IMR-90 (cell line): ENCODE measurements at regions of chr14 and their contacts with region 1.

Region 1: GRCh38 chr14:51547260-51547659 is 104.5 kb upstream of the FRMD6 start:
- DNase-seq: peak; percentile 100
- ATAC-seq: peak; percentile 93
- H3K4me3 ChIP-seq: no peak overlapping the region
- H3K27ac ChIP-seq: no peak overlapping the region
- H3K4me1 ChIP-seq: peaks cover 17% of the 10 kb centered on the region
- H3K27me3 ChIP-seq: no peaks in the 10 kb centered on the region
- CTCF ChIP-seq: no peak
- POLR2A ChIP-seq: peak; percentile 31; the same call in 1 of the 2 replicates
- RAD21 ChIP-seq: no peak; the same call in 1 of the 2 replicates

Region 2: DNA sequence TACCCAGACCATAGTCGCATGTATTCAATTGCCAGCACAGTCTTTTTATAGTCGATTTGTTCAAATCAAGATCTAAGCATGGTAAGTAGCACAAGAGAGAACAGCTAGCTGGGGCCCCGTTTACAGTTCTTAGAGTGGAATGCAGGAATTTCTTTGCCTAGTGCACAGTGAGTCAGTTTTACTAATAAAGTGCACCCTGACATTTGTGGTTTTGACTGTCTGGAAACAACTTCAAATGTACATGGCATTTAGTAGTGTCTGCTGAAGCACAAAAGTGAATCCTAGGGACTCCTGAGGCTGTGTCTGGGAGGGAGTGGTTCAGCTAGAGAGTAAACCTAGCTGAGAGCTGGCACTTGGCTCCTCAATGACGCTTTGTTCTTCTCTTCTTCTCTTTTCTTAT is 242.3 kb before region 1 on chr14:
- CTCF ChIA-PET with region 1: no interaction called
- POLR2A ChIA-PET with region 1: no interaction called
- dilution Hi-C with region 1: no loop called
- in situ Hi-C with region 1: no loop called
- intact Hi-C with region 1: loop called (anchors 5 kb)
- DNase-seq: peak; percentile 96
- ATAC-seq: peak; percentile 97
- H3K4me3 ChIP-seq: no peak overlapping the region
- H3K27ac ChIP-seq: peak overlapping the region; percentile 33; the same call in 1 of the 2 replicates
- H3K4me1 ChIP-seq: peaks cover 5% of the 10 kb centered on the region
- H3K27me3 ChIP-seq: no peaks in the 10 kb centered on the region
- CTCF ChIP-seq: no peak
- POLR2A ChIP-seq: no peak; the same call in 1 of the 2 replicates
- RAD21 ChIP-seq: peak; percentile 37

Region 3: GRCh38 chr14:51581017-51581881 is 34.0 kb after region 1 on chr14:
- CTCF ChIA-PET with region 1: no interaction called
- POLR2A ChIA-PET with region 1: no interaction called
- dilution Hi-C with region 1: no loop called
- in situ Hi-C with region 1: no loop called
- intact Hi-C with region 1: no loop called
- DNase-seq: peak; percentile 94
- ATAC-seq: peak; percentile 91
- H3K4me3 ChIP-seq: peak overlapping the region; percentile 19; the same call in 1 of the 2 replicates
- H3K27ac ChIP-seq: peak overlapping the region; percentile 16; the same call in 1 of the 2 replicates
- H3K4me1 ChIP-seq: peaks cover 12% of the 10 kb centered on the region
- H3K27me3 ChIP-seq: no peaks in the 10 kb centered on the region
- CTCF ChIP-seq: no peak
- POLR2A ChIP-seq: no peak
- RAD21 ChIP-seq: 0 out of 2 replicates have a peak, but pooled peaks have one; percentile 1

Region 4: GRCh38 chr14:51716610-51717009 is 169.3 kb after region 1 on chr14:
- CTCF ChIA-PET with region 1: no interaction called
- POLR2A ChIA-PET with region 1: no interaction called
- dilution Hi-C with region 1: no loop called
- in situ Hi-C with region 1: no loop called
- intact Hi-C with region 1: no loop called
- DNase-seq: peak; percentile 52
- ATAC-seq: no peak; the same call in 1 of the 2 replicates
- H3K4me3 ChIP-seq: no peak overlapping the region
- H3K27ac ChIP-seq: no peak overlapping the region
- H3K4me1 ChIP-seq: peaks cover 3% of the 10 kb centered on the region
- H3K27me3 ChIP-seq: no peaks in the 10 kb centered on the region
- CTCF ChIP-seq: no peak
- POLR2A ChIP-seq: no peak
- RAD21 ChIP-seq: no peak